PC-3 (cell line): ENCODE measurements at regions of chr2 and their contacts with region 1.

Region 1: DNA sequence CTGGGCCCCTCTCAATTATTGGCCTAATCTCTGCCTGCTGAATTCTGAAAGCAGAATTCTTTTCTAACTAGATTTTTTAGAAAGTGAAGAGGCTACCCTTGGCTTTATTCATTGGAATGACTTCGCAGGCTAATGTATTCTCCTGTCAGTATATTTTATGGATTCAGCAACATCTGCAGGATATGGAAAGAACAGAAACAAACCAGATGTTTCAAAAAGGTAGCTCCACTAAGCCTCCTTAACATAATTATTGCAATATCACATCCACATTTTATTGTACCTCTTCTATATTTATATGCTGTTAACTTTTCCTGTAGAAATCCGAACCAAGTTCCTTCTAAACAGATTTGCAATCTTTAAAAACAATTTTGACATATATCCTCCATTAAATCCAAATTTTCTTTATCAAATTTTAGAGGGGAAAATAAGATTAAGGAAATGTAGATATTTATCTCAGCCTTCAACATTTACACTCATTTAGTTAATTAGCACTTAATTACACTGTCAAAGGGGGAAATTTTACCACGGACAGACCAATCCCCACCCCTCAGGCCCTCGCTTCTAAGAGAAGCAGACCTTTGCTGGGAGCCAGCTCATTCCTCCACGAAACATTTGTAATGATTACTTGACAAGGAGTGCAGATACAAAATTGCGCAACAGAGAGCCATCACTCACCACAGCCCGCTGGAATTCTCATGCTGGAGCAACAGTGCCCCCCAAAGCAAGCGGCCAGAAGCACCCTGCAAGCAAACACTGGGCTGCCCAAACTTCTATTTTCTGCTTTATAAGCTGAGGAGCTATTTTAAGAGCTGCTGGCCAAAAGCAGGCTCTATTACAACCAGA is 253.4 kb downstream of the ETAA1 start:
- DNase-seq: peak; percentile 85
- ATAC-seq: peak; percentile 100
- H3K4me3 ChIP-seq: no peak overlapping the region
- H3K27ac ChIP-seq: 0 out of 2 replicates have a peak overlapping the region, but pooled peaks have one; percentile 19
- H3K4me1 ChIP-seq: peaks cover 6% of the 10 kb centered on the region
- H3K27me3 ChIP-seq: no peaks in the 10 kb centered on the region
- CTCF ChIP-seq: peak; percentile 90

Region 2: GRCh38 chr2:67234439-67234838 is 416.1 kb before region 1 on chr2:
- CTCF ChIA-PET with region 1: interaction called, 4 read pairs
- POLR2A ChIA-PET with region 1: no interaction called
- intact Hi-C with region 1: loop called (anchors 2 kb)
- DNase-seq: peak; percentile 51
- ATAC-seq: peak; percentile 56; the same call in 1 of the 2 replicates
- H3K4me3 ChIP-seq: no peak overlapping the region
- H3K27ac ChIP-seq: no peak overlapping the region
- H3K4me1 ChIP-seq: no peaks in the 10 kb centered on the region
- H3K27me3 ChIP-seq: no peaks in the 10 kb centered on the region
- CTCF ChIP-seq: peak; percentile 62

Region 3: GRCh38 chr2:67322353-67323001 is 328.0 kb before region 1 on chr2:
- CTCF ChIA-PET with region 1: no interaction called
- POLR2A ChIA-PET with region 1: no interaction called
- intact Hi-C with region 1: loop called (anchors 5 kb)
- DNase-seq: peak; percentile 79
- ATAC-seq: peak; percentile 93
- H3K4me3 ChIP-seq: no peak overlapping the region
- H3K27ac ChIP-seq: peak overlapping the region; percentile 44
- H3K4me1 ChIP-seq: no peaks in the 10 kb centered on the region; the same call in 1 of the 2 replicates
- H3K27me3 ChIP-seq: no peaks in the 10 kb centered on the region
- CTCF ChIP-seq: peak; percentile 88

Region 4: GRCh38 chr2:67561457-67561965 is 89.0 kb before region 1 on chr2:
- CTCF ChIA-PET with region 1: no interaction called
- POLR2A ChIA-PET with region 1: no interaction called
- intact Hi-C with region 1: loop called (anchors 5 kb)
- DNase-seq: peak; percentile 95
- ATAC-seq: peak; percentile 79
- H3K4me3 ChIP-seq: no peak overlapping the region
- H3K27ac ChIP-seq: peak overlapping the region; percentile 63
- H3K4me1 ChIP-seq: peaks cover 51% of the 10 kb centered on the region
- H3K27me3 ChIP-seq: no peaks in the 10 kb centered on the region
- CTCF ChIP-seq: no peak

Region 5: DNA sequence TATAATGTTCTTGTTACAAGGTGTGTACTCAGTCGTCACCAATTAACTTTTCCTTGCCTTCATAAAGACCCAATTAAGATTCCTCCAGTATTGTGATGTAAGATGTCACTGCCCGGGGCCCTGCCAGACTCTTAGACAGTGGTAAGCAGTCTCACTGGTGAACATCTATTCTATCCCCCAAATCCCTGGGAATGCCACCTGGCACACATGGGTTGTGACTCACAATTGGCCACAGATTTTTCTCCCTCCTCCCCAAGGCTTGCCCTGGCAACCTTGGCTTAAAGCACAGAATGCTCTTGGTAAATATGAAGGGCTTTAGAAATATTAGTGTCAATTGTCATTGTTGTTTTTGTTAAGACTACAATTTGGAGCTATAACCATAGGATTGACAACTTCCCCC is 34.5 kb after region 1 on chr2:
- CTCF ChIA-PET with region 1: no interaction called
- POLR2A ChIA-PET with region 1: no interaction called
- intact Hi-C with region 1: no loop called
- DNase-seq: peak; percentile 32
- ATAC-seq: no peak
- H3K4me3 ChIP-seq: no peak overlapping the region
- H3K27ac ChIP-seq: no peak overlapping the region
- H3K4me1 ChIP-seq: no peaks in the 10 kb centered on the region
- H3K27me3 ChIP-seq: 0 out of 2 replicates have a peak, but pooled peaks cover 5% of the 10 kb centered on the region
- CTCF ChIP-seq: no peak